ENCODE measurements at regions of chr15 and their contacts with region 1.

Region 1: GRCh38 chr15:69272139-69272538 is 26.6 kb upstream of the PAQR5 start:
- DNase-seq: no peak
- H3K4me3 ChIP-seq: no peak overlapping the region
- H3K27ac ChIP-seq: no peak overlapping the region
- H3K4me1 ChIP-seq: no peaks in the 10 kb centered on the region
- H3K27me3 ChIP-seq: peaks cover 0 to under 1% (median 0%) of the 10 kb centered on the region in 3 donors
- CTCF ChIP-seq: no peak
- EP300 ChIP-seq: no peak
- POLR2A ChIP-seq: no peak

Region 2: DNA sequence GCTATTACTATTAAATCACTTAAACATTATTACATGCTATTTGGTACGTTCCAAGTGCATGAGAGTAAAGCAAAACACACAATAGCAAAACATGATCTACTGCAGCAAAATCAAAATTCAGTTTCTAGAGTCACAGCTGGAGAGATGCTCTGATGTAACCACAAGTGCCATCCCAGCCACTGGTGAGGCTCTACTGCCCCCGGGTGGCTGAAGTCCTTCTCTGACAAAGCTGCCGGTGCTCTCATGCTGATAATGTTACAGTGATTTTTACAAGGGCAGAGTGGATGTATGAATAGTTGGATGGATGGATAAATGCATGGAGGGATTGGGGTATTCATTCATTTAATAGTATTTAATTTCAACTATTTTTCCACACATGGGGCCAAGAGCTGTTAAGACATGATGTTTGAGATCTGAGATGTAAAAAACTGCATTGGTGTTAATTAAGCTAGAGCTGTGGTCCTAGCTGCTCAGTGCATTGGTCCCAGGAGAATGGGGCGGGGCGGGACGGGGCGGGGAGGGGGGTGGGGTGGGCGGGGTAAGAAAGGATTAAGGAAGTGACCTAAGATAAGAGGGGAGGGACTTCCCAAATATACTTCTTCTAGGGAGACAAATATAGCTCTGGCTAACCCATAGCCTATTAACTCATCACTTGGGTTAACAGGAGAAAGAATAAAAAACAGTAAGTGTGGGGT is 347.1 kb before region 1 on chr15:
- intact Hi-C with region 1: no loop called
- DNase-seq: peak; percentile 69 to 89
- H3K4me3 ChIP-seq: no peak overlapping the region
- H3K27ac ChIP-seq: no peak overlapping the region
- H3K4me1 ChIP-seq: no peaks in the 10 kb centered on the region
- H3K27me3 ChIP-seq: peaks cover 0 to under 1% (median 0%) of the 10 kb centered on the region in 3 donors
- CTCF ChIP-seq: peak in 5 of 7 experiments; percentile 40 to 68 (median 59)
- EP300 ChIP-seq: no peak
- POLR2A ChIP-seq: no peak

Region 3: DNA sequence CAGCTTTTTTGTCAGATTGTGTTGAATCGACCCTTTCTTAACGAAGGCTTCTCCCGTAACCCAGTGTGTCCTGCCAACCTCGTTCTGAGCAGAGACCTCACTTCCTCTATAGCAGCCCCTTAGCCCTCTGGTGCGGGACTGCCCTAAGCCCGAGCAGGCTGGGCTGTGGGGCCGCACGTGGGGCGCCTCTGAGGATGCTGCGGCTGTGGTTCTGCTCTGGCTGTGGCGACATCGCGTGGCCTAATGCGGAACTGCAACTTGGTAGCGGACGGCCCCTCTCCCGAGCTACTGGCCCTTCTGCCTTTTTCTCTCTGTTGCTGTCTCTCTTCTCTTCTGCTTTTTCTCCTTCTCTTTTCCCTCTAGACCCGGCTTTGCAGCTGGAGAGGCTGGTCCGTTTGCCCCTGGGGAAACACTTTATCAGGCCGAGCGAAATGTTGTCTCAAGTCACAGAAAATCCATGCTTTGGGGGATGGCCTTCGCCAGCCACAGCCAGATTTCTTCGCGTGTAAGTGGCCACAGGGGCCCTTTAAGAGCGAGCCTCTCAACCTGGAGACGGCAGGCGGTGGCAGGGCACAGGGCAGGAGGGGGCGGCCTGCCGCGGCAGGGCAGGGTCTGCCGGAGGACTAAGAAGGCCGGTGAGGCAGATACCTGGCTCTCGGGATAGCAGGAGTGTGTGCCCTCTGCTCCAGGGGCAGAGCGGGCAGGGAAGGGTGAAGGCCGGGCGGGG is 122.6 kb after region 1 on chr15:
- intact Hi-C with region 1: loop called (anchors 10 kb)
- DNase-seq: peak; percentile 82 to 93
- H3K4me3 ChIP-seq: no peak overlapping the region
- H3K27ac ChIP-seq: no peak overlapping the region
- H3K4me1 ChIP-seq: peaks cover 0 to 9% (median 9%) of the 10 kb centered on the region in 4 donors
- H3K27me3 ChIP-seq: peaks cover 0 to 4% (median 0%) of the 10 kb centered on the region in 3 donors
- CTCF ChIP-seq: peak in 5 of 7 experiments; percentile 89 to 95 (median 92)
- EP300 ChIP-seq: no peak
- POLR2A ChIP-seq: no peak

Region 4: GRCh38 chr15:70281811-70282307 is 1009.7 kb after region 1 on chr15:
- intact Hi-C with region 1: no loop called
- DNase-seq: no peak
- H3K4me3 ChIP-seq: no peak overlapping the region
- H3K27ac ChIP-seq: peak overlapping the region in 1 of 5 donors; percentile 9
- H3K4me1 ChIP-seq: peaks cover 6 to 19% (median 12%) of the 10 kb centered on the region in 4 donors
- H3K27me3 ChIP-seq: no peaks in the 10 kb centered on the region
- CTCF ChIP-seq: no peak
- EP300 ChIP-seq: no peak
- POLR2A ChIP-seq: no peak

Measured in stomach (tissue), 19 donors.